ENCODE measurements at regions of chr6 and their contacts with region 1.

Region 1: DNA sequence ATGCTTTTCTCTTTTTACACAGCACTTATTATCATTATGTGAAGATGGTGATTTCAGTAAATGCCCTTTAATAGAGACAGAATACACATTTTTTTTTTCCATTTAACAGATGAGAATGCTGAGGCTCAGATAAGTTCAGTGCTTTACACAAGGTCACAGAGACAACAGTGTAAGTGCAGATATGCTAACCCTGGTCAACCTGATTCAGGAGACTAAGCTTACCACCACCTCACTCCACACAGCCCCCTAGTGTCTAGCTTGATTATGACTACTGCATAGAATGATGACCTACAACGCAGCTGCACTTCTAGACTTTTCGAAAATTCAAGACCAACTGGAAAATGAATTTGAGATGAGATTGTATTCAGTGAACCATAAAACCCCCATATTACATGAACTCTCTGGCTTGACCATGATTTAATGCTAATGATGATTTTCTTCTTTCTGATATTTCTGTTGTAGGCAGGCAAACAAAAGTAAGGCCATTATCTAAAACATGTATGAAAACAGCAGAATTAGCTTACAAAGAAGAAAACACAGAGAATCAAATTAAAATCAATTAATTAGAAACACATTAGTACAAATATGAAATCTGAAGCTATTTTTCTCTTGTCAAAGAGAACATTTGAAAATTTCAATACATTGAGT is 212.1 kb upstream of the PHACTR1 start:
- DNase-seq: no peak
- ATAC-seq: no peak
- H3K4me3 ChIP-seq: no peak overlapping the region
- H3K27ac ChIP-seq: no peak overlapping the region
- H3K4me1 ChIP-seq: no peaks in the 10 kb centered on the region
- H3K27me3 ChIP-seq: no peaks in the 10 kb centered on the region
- CTCF ChIP-seq: peak in 6 of 9 donors; percentile 4 to 46 (median 23)

Region 2: GRCh38 chr6:11194356-11195218 is 1309.9 kb before region 1 on chr6:
- intact Hi-C with region 1: loop called in 1 of 10 experiments (anchors 10 kb)
- DNase-seq: no peak
- ATAC-seq: peak in 7 of 8 donors; percentile 26 to 60 (median 45)
- H3K4me3 ChIP-seq: peak overlapping the region in 2 of 10 donors; percentile 10
- H3K27ac ChIP-seq: peak overlapping the region in 8 of 10 donors; percentile 43 to 80 (median 57)
- H3K4me1 ChIP-seq: peaks cover 2 to 58% (median 45%) of the 10 kb centered on the region in 9 donors
- H3K27me3 ChIP-seq: no peaks in the 10 kb centered on the region
- CTCF ChIP-seq: no peak

Region 3: GRCh38 chr6:12174878-12175277 is 329.6 kb before region 1 on chr6:
- intact Hi-C with region 1: no loop called
- DNase-seq: no peak
- ATAC-seq: no peak
- H3K4me3 ChIP-seq: no peak overlapping the region
- H3K27ac ChIP-seq: no peak overlapping the region
- H3K4me1 ChIP-seq: no peaks in the 10 kb centered on the region
- H3K27me3 ChIP-seq: no peaks in the 10 kb centered on the region
- CTCF ChIP-seq: no peak

Measured in heart right ventricle (tissue), 16 donors.